CD14-positive monocyte (primary cell): ENCODE measurements at regions of chr3 and their contacts with region 1.

Region 1: GRCh38 chr3:122299872-122300460 is 25.1 kb upstream of the CSTA start:
- DNase-seq: peak; percentile 41 to 67 (median 54)
- H3K4me3 ChIP-seq: no peak overlapping the region
- H3K4me3 Mint-ChIP-seq: no peak overlapping the region
- H3K27ac ChIP-seq: no peak overlapping the region
- H3K27ac Mint-ChIP-seq: no peak overlapping the region
- H3K4me1 ChIP-seq: peaks cover 20 to 41% of the 10 kb centered on the region in 2 donors
- H3K4me1 Mint-ChIP-seq: peaks cover 16% of the 10 kb centered on the region
- H3K27me3 ChIP-seq: no peaks in the 10 kb centered on the region
- H3K27me3 Mint-ChIP-seq: no peaks in the 10 kb centered on the region
- CTCF ChIP-seq: peak; percentile 83

Region 2: GRCh38 chr3:121970047-121970446 is 329.9 kb before region 1 on chr3:
- intact Hi-C with region 1: loop called in 1 of 2 experiments (anchors 5 kb)
- DNase-seq: no peak
- H3K4me3 ChIP-seq: no peak overlapping the region
- H3K4me3 Mint-ChIP-seq: no peak overlapping the region
- H3K27ac ChIP-seq: no peak overlapping the region
- H3K27ac Mint-ChIP-seq: no peak overlapping the region
- H3K4me1 ChIP-seq: no peaks in the 10 kb centered on the region
- H3K4me1 Mint-ChIP-seq: no peaks in the 10 kb centered on the region
- H3K27me3 ChIP-seq: no peaks in the 10 kb centered on the region
- H3K27me3 Mint-ChIP-seq: peaks cover 0 to 2% (median 0%) of the 10 kb centered on the region in 3 donors
- CTCF ChIP-seq: no peak

Region 3: GRCh38 chr3:122101646-122102045 is 198.3 kb before region 1 on chr3:
- intact Hi-C with region 1: loop called (anchors 5 to 10 kb)
- DNase-seq: peak; percentile 53 to 68 (median 66)
- H3K4me3 ChIP-seq: peak overlapping the region in 1 of 3 experiments; percentile 3
- H3K4me3 Mint-ChIP-seq: peak overlapping the region in 1 of 2 donors; percentile 1
- H3K27ac ChIP-seq: peak overlapping the region in 1 of 2 donors; percentile 58
- H3K27ac Mint-ChIP-seq: peak overlapping the region; percentile 34 to 92 (median 76)
- H3K4me1 ChIP-seq: peaks cover 39 to 42% of the 10 kb centered on the region in 2 donors
- H3K4me1 Mint-ChIP-seq: peaks cover 35% of the 10 kb centered on the region
- H3K27me3 ChIP-seq: no peaks in the 10 kb centered on the region
- H3K27me3 Mint-ChIP-seq: no peaks in the 10 kb centered on the region
- CTCF ChIP-seq: peak; percentile 65

Region 4: DNA sequence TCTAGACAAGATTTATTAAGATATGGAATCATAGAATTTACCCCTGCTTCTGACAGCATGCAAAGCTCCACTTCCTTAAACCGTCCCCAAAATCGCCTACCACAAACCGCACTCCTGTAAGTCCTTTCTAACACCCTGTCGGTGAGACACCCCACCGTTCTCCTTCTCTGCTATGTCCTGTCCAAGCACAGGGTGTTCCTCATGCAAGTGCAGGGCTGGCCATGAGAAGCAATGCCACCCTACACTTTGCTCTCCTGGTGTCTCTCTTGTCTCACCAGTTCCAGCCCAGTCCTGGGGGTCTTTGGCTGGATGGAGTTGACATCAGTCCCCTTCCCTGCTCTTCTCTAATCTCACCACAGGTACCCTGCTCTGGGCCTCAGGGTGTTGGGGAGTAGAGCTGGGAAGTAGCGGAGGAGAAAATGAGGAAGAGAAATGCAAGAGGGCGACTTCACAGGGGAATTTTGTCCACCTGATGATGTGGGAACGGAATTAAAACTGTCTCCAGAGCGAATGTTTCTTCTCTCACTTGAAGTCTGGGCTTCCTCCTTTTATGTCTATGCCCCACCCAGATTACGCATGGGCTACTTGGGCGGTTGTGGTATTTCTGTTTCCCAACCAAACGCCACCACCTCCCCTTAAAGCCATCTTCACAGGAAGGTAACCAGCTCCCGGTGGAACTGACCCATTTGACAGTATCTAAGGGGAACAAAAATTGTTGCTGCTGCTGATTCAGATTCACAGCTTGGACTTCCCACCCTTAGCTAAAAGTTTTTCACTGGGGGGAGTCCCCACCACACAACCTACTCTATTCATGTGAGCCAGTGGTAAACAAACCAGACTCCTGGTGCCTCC is 66.6 kb before region 1 on chr3:
- intact Hi-C with region 1: loop called in 1 of 2 experiments (anchors 10 kb)
- DNase-seq: peak; percentile 91 to 99 (median 95)
- H3K4me3 ChIP-seq: peak overlapping the region; percentile 19 to 66 (median 57)
- H3K4me3 Mint-ChIP-seq: peak overlapping the region; percentile 70 to 92
- H3K27ac ChIP-seq: peak overlapping the region; percentile 85 to 98
- H3K27ac Mint-ChIP-seq: peak overlapping the region; percentile 96 to 100 (median 98)
- H3K4me1 ChIP-seq: peaks cover 49 to 58% of the 10 kb centered on the region in 2 donors
- H3K4me1 Mint-ChIP-seq: peaks cover 60% of the 10 kb centered on the region
- H3K27me3 ChIP-seq: no peaks in the 10 kb centered on the region
- H3K27me3 Mint-ChIP-seq: peaks cover 0 to 3% (median 1%) of the 10 kb centered on the region in 3 donors
- CTCF ChIP-seq: peak; percentile 6

Region 5: DNA sequence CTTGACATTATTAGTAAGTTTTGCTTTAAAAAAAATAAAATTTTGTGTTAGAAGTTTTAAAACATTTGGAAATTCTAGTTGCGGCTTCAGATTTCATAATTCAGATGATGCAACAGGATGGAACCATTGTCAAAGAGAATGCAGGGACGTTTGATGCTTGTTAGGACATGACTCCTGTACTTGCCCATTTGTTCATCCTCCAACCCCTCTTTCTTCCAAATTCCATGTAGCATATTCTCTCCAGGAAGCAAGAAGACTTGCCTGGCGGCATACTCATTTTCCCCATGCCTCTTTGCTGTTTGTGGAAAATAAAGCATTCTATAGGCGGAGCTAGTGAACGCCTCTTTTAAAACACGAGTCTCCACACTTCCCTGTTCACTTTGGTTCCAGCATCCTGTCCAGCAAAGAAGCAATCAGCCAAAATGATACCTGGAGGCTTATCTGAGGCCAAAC is 24.9 kb after region 1 on chr3 and contains the start of gene CSTA:
- intact Hi-C with region 1: no loop called
- DNase-seq: peak; percentile 67 to 75 (median 70)
- H3K4me3 ChIP-seq: peak within 1 kb of the TSS; percentile 65 to 97 (median 95)
- H3K4me3 Mint-ChIP-seq: peak within 1 kb of the TSS; percentile 83 to 95
- H3K27ac ChIP-seq: peak within 1 kb of the TSS in 1 of 2 donors; percentile 83
- H3K27ac Mint-ChIP-seq: peak within 1 kb of the TSS; percentile 89 to 96 (median 93)
- H3K4me1 ChIP-seq: peaks cover 25 to 50% of the 10 kb centered on the region in 2 donors
- H3K4me1 Mint-ChIP-seq: peaks cover 58% of the 10 kb centered on the region
- H3K27me3 ChIP-seq: no peaks in the 10 kb centered on the region
- H3K27me3 Mint-ChIP-seq: no peaks in the 10 kb centered on the region
- CTCF ChIP-seq: no peak
- polyA plus RNA-seq, gene CSTA: 211 to 582 (median 515) TPM

Region 6: GRCh38 chr3:122435950-122436349 is 136.0 kb after region 1 on chr3:
- intact Hi-C with region 1: no loop called
- DNase-seq: no peak
- H3K4me3 ChIP-seq: no peak overlapping the region
- H3K4me3 Mint-ChIP-seq: no peak overlapping the region
- H3K27ac ChIP-seq: no peak overlapping the region
- H3K27ac Mint-ChIP-seq: no peak overlapping the region
- H3K4me1 ChIP-seq: no peaks in the 10 kb centered on the region
- H3K4me1 Mint-ChIP-seq: no peaks in the 10 kb centered on the region
- H3K27me3 ChIP-seq: no peaks in the 10 kb centered on the region
- H3K27me3 Mint-ChIP-seq: peaks cover 0 to 2% (median 0%) of the 10 kb centered on the region in 3 donors
- CTCF ChIP-seq: no peak